Sigmoid colon (tissue), 7 donors: ENCODE measurements at regions of chr1 and their contacts with region 1.

Region 1: DNA sequence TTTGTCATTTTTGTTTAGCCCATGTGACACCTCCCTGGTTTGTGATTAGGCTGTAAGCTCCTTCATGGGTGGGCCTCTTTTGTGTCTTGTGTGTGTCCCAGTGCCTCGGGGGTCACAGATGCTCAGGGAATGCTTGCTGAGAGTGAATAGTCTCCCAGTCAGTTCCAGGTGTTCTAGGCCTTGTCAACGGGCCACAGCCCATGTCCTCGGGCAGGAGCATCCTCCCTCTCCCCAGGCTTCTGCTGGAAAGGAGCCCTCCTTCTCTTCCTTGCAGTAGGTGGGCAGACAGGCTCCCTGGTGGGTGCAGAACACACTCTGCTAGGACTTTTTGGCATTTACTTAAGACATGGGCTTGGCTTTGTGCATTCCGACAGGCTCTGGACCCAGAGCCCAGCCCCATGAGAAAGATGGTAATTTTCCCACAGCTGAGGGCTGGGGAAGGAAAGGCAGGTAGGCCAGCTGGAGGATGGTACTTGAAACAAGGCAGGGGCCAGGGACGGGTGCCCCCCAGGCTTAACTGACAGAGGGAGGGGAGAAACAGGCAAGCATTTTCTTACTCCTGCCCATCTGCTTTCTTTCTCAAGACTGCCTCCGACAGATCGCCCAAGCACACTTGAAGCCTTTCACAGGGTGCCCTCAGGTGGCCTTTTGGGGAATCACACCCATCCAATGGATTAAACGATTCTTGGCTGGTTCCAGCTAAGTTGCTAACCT is 7.1 kb upstream of the CPLANE2 start:
- DNase-seq: peak; percentile 90
- H3K4me3 ChIP-seq: no peak overlapping the region
- H3K27ac ChIP-seq: peak overlapping the region in 3 of 4 donors; percentile 19 to 37 (median 19)
- H3K4me1 ChIP-seq: peaks cover 0 to 32% (median 23%) of the 10 kb centered on the region in 4 donors
- H3K27me3 ChIP-seq: no peaks in the 10 kb centered on the region
- CTCF ChIP-seq: peak; percentile 64 to 84 (median 82)
- EP300 ChIP-seq: no peak
- POLR2A ChIP-seq: no peak

Region 2: DNA sequence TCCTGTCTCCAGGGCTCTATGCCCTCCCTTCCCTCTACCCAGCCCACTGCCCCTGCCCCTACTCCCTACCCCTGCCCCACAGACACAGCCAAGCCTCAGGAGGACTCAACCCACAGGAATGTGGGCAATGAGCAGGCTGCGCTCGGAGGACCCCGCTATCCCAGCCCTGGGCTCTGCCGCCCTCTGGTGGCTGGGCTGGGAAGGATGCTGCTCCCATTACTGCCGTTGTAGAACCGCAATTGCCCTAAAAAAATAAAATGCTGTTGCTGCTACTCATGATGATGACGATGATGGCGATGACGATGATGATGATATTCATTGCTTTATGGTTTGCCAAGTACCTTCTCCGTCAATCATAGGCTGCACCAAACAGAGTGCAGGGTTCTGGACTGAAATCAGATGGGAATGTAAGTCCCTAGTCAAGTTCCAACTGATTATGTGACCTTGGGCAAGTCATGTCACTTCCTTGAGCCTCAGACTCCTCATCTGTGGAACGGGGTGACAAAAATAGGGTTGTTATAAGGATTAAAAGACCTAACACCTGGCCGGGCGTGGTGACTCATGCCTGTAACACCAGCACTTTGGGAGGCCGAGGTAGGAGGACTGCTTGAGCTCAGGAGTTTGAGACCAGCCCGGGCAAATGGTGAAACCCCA is 56.2 kb before region 1 on chr1:
- intact Hi-C with region 1: loop called (anchors 5 kb)
- DNase-seq: peak; percentile 86
- H3K4me3 ChIP-seq: no peak overlapping the region
- H3K27ac ChIP-seq: peak overlapping the region in 1 of 4 donors; percentile 21
- H3K4me1 ChIP-seq: peaks cover 0 to 14% (median 6%) of the 10 kb centered on the region in 4 donors
- H3K27me3 ChIP-seq: no peaks in the 10 kb centered on the region
- CTCF ChIP-seq: peak; percentile 92 to 99 (median 97)
- EP300 ChIP-seq: no peak
- POLR2A ChIP-seq: no peak

Region 3: GRCh38 chr1:16286122-16286521 is 42.0 kb after region 1 on chr1:
- intact Hi-C with region 1: no loop called
- DNase-seq: no peak
- H3K4me3 ChIP-seq: no peak overlapping the region
- H3K27ac ChIP-seq: no peak overlapping the region
- H3K4me1 ChIP-seq: no peaks in the 10 kb centered on the region
- H3K27me3 ChIP-seq: no peaks in the 10 kb centered on the region
- CTCF ChIP-seq: no peak
- EP300 ChIP-seq: no peak
- POLR2A ChIP-seq: no peak

Region 4: DNA sequence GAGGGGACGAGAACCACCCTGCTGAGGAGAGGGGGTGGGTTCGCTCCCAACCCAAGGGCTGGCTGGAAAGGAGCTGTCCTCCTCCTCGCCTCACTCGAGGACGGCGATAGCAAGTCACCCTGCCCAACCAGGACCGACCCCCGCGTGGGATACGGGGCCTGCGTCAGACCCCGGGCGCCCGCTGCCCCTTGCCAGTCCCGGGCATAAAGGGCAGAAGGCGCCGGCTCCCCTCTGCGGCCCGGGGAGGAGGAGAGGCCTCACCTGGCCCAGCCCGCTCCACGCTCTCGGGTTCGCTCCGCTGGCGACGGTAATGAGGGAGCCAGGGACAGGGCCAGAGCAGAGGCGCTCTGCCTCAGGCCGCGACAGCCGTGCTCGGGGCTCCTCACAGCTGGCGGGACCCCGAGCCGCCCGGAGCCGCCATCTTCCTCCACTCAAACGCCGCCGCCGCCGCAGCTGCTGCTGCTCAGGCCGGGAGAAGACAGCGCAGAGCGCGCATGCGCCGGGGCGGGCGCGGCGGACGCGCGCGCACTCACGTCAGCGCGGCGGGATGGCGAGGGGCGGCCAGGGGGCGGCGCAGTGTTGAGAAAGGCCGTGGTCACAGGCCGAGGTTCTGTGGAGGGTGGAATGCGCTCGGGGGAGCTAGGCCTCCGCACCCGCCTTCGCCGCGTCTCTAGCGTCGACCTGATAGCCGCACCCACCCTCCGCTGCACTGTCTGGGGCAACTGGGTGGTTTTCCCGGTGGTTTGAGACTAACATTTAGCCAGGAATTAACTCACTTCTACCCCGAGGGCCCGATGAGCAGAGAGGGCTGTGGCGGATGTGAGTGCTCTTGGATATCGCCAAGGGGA is 108.1 kb after region 1 on chr1 and contains the start of gene FBXO42:
- intact Hi-C with region 1: loop called (anchors 5 kb)
- DNase-seq: peak; percentile 95
- H3K4me3 ChIP-seq: peak within 1 kb of the TSS; percentile 68 to 99 (median 92)
- H3K27ac ChIP-seq: peak within 1 kb of the TSS; percentile 86 to 98 (median 96)
- H3K4me1 ChIP-seq: peaks cover 0 to 40% (median 27%) of the 10 kb centered on the region in 4 donors
- H3K27me3 ChIP-seq: no peaks in the 10 kb centered on the region
- CTCF ChIP-seq: peak in 1 of 4 experiments; percentile 33
- EP300 ChIP-seq: no peak
- POLR2A ChIP-seq: peak; percentile 53 to 68
- total RNA-seq, gene FBXO42: 16.6 to 29.6 (median 20.4) TPM